ENCODE measurements at regions of chr7 and their contacts with region 1.

Region 1: DNA sequence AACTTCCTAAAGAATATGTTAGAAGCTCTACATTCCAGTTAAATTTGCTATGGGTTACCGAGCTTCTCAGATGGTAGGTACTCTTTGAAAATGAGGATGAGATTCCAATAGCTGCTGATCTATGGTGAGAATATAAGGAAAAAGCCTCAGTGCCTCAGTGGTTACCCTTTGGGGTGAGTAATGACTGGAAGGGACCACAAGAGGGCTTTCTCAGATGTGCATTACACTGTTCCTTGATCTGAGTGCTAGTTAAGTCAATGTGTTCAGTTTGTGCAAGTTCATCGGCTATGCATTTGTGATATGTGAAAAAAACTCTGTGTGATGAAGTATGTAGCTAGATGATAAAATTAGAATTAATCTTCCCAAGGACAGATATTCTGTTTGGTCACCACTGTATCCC is 3.5 kb downstream of the NRCAM start:
- DNase-seq: no peak
- H3K4me3 ChIP-seq: no peak overlapping the region
- H3K27me3 ChIP-seq: peaks cover 29% of the 10 kb centered on the region
- CTCF ChIP-seq: peak; percentile 67

Region 2: GRCh38 chr7:108442039-108442568 is 10.6 kb before region 1 on chr7:
- CTCF ChIA-PET with region 1: interaction called, 21 read pairs
- POLR2A ChIA-PET with region 1: no interaction called
- DNase-seq: no peak
- H3K4me3 ChIP-seq: no peak overlapping the region
- H3K27me3 ChIP-seq: no peaks in the 10 kb centered on the region
- CTCF ChIP-seq: no peak

Region 3: DNA sequence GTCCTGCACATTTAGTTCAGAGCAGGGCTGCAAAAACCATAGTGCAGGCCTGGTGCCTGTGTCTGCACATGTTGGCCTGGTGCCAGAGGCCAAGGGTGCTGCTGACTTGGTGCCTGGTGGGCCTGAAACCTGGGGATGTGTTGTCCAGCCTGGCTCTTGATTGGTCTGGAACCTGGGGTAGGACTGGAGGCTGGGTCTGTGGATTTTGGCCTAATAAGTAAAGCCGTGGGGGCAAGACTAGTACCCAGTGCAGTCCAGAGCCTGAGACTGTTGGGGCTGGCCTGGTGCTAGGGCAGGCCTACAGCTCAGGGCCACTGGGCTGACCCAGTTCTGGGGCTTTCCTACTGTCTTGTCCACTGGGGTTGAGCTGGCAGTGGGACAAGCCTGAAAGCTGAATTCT is 934.8 kb after region 1 on chr7:
- CTCF ChIA-PET with region 1: no interaction called
- POLR2A ChIA-PET with region 1: no interaction called
- DNase-seq: no peak
- H3K4me3 ChIP-seq: no peak overlapping the region
- H3K27me3 ChIP-seq: no peaks in the 10 kb centered on the region
- CTCF ChIP-seq: no peak